HepG2 (cell line): ENCODE measurements at regions of chr15 and their contacts with region 1.

Region 1: DNA sequence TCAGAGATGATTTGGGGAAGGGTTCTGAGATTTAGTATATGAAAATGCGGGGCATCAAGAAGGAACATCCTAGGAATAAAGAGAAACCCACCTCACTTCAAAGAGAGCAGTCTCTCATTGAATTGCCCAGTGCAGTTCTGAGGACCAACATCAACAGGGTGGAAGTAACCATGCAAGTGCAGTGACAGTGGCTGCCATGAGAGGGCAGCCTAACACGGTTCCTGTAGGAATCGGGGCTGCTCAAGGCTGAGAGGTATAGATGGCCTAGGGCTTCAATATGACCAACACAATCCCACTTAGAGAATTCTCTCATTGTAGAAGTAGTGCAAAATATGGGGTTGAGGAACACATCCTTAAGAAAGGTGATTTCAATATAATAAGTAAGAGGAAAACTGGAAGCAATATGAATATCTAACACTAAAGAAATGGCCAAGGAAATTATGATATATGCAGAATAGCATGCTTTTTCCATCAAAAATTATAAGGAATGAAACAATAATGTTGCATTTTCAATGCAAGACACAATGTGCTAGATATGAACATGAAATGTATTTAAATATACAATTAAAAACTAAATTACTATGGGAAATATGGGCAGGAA is 51.1 kb upstream of the ARRDC4 start:
- DNase-seq: peak; percentile 33
- ATAC-seq: peak; percentile 98
- H3K4me3 ChIP-seq: no peak overlapping the region
- H3K27ac ChIP-seq: no peak overlapping the region
- H3K4me1 ChIP-seq: no peaks in the 10 kb centered on the region
- H3K27me3 ChIP-seq: peaks cover 0 to 7% of the 10 kb centered on the region in 2 experiments; a peak in 1 of 5 replicates
- CTCF ChIP-seq: peak; percentile 89
- EP300 ChIP-seq: no peak
- POLR2A ChIP-seq: no peak
- RAD21 ChIP-seq: peak; percentile 63; the same call in 1 of the 2 replicates

Region 2: GRCh38 chr15:97995881-97996603 is 86.7 kb after region 1 on chr15:
- CTCF ChIA-PET with region 1: no interaction called
- POLR2A ChIA-PET with region 1: no interaction called
- in situ Hi-C with region 1: no loop called
- intact Hi-C with region 1: loop called (anchors 10 kb)
- DNase-seq: no peak
- ATAC-seq: peak; percentile 87
- H3K4me3 ChIP-seq: peak overlapping the region in 1 of 3 experiments; percentile 21; a peak in 2 of 6 replicates
- H3K27ac ChIP-seq: no peak overlapping the region
- H3K4me1 ChIP-seq: 0 out of 2 replicates have a peak, but pooled peaks cover 7% of the 10 kb centered on the region
- H3K27me3 ChIP-seq: no peaks in the 10 kb centered on the region
- CTCF ChIP-seq: peak; percentile 68
- EP300 ChIP-seq: no peak
- POLR2A ChIP-seq: no peak
- RAD21 ChIP-seq: peak; percentile 28; the same call in 1 of the 2 replicates

Region 3: DNA sequence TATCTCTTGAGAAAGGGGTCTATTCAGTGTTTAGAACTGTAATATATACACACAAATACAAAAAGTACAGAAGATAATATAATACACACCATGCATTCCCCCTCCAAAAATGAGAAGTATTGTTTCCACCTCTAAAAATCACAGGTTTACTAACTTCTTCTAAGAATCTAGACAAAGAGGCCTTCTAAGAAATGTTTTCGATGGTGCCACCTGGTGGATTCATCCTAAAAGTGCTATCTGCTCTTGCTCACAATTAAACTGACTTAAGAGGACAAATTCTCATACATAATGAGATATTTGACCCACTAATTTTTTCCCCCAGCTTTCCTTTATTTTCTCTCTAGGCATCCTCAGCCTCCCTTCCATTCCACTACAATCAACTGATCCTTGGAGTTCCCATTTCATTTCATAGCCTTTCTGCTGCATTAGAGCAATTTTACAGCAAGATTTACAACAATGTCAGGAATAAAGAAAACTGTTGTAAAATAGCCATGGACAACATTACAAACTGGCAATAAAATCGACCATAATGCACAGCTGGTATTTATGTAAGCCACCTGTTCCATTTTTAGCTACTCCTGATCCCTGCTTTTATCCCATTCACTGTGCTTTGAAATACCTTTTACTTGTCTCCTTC is 175.7 kb after region 1 on chr15:
- CTCF ChIA-PET with region 1: interaction called, 30 read pairs
- POLR2A ChIA-PET with region 1: no interaction called
- in situ Hi-C with region 1: loop called (anchors 5 kb)
- intact Hi-C with region 1: loop called (anchors 1 kb)
- DNase-seq: peak; percentile 43
- ATAC-seq: no peak
- H3K4me3 ChIP-seq: no peak overlapping the region
- H3K27ac ChIP-seq: no peak overlapping the region
- H3K4me1 ChIP-seq: no peaks in the 10 kb centered on the region
- H3K27me3 ChIP-seq: no peaks in the 10 kb centered on the region
- CTCF ChIP-seq: peak; percentile 62
- EP300 ChIP-seq: no peak
- POLR2A ChIP-seq: no peak
- RAD21 ChIP-seq: no peak

Region 4: GRCh38 chr15:98113327-98113726 is 203.9 kb after region 1 on chr15:
- CTCF ChIA-PET with region 1: no interaction called
- POLR2A ChIA-PET with region 1: no interaction called
- in situ Hi-C with region 1: no loop called
- intact Hi-C with region 1: no loop called
- DNase-seq: no peak
- ATAC-seq: no peak
- H3K4me3 ChIP-seq: no peak overlapping the region
- H3K27ac ChIP-seq: no peak overlapping the region
- H3K4me1 ChIP-seq: no peaks in the 10 kb centered on the region
- H3K27me3 ChIP-seq: no peaks in the 10 kb centered on the region
- CTCF ChIP-seq: no peak
- EP300 ChIP-seq: no peak
- POLR2A ChIP-seq: no peak
- RAD21 ChIP-seq: no peak

Region 5: GRCh38 chr15:98177924-98178592 is 268.7 kb after region 1 on chr15:
- CTCF ChIA-PET with region 1: interaction called, 17 read pairs
- POLR2A ChIA-PET with region 1: no interaction called
- in situ Hi-C with region 1: loop called (anchors 5 kb)
- intact Hi-C with region 1: loop called (anchors 1 kb)
- DNase-seq: peak; percentile 56
- ATAC-seq: peak; percentile 97
- H3K4me3 ChIP-seq: no peak overlapping the region
- H3K27ac ChIP-seq: no peak overlapping the region
- H3K4me1 ChIP-seq: no peaks in the 10 kb centered on the region
- H3K27me3 ChIP-seq: peaks cover 0 to 14% of the 10 kb centered on the region in 2 experiments; a peak in 1 of 5 replicates
- CTCF ChIP-seq: peak; percentile 85
- EP300 ChIP-seq: no peak
- POLR2A ChIP-seq: no peak
- RAD21 ChIP-seq: peak; percentile 57

Region 6: GRCh38 chr15:98292442-98293240 is 383.2 kb after region 1 on chr15:
- CTCF ChIA-PET with region 1: interaction called, 7 read pairs
- POLR2A ChIA-PET with region 1: no interaction called
- in situ Hi-C with region 1: loop called (anchors 10 kb)
- intact Hi-C with region 1: loop called (anchors 1 kb)
- DNase-seq: peak; percentile 27
- ATAC-seq: peak; percentile 98
- H3K4me3 ChIP-seq: no peak overlapping the region
- H3K27ac ChIP-seq: no peak overlapping the region
- H3K4me1 ChIP-seq: no peaks in the 10 kb centered on the region
- H3K27me3 ChIP-seq: peaks cover 5 to 27% of the 10 kb centered on the region in 2 experiments
- CTCF ChIP-seq: peak; percentile 79
- EP300 ChIP-seq: no peak
- POLR2A ChIP-seq: no peak
- RAD21 ChIP-seq: no peak

Region 7: DNA sequence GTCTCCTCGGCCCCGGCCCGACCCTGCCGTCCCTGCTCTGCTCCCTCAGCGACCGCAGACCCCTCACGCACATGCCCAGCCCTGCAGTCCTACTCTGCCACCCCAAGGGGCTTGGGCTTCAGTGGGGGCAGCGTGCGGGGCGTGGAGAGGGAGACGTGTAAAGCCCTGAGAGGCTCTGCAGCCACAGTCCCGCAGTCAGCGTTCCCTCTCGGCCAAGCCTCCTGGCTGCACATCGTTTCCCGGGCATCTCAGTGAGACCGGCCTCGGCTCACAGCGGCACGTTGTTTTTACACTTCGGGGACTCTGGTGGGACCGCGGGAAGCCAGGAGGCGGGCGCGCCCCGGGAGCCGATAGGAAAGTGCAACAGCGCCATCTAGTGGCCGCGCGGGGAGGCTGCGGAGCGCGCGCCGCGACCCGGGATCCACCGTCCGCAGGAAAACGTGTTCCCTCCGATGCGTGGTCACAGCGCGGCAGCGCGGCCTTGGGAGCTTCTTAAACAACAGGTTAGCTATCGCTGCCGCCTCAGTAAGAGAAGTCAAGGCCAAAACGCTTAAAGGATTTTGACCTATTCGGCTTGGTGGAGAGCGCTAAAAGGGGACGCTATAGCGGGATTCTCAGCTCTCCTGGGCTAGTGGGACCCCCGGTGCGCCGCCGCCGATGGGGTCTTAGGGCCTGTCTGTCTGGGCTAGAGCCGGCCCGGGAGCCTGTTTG is 512.2 kb after region 1 on chr15:
- CTCF ChIA-PET with region 1: no interaction called
- POLR2A ChIA-PET with region 1: no interaction called
- in situ Hi-C with region 1: loop called (anchors 25 kb)
- intact Hi-C with region 1: loop called (anchors 10 kb)
- DNase-seq: peak; percentile 11
- ATAC-seq: peak; percentile 90
- H3K4me3 ChIP-seq: no peak overlapping the region
- H3K27ac ChIP-seq: no peak overlapping the region
- H3K4me1 ChIP-seq: no peaks in the 10 kb centered on the region
- H3K27me3 ChIP-seq: peaks cover 7 to 42% of the 10 kb centered on the region in 2 experiments; a peak in 4 of 5 replicates
- CTCF ChIP-seq: peak; percentile 96
- EP300 ChIP-seq: no peak
- POLR2A ChIP-seq: no peak
- RAD21 ChIP-seq: peak; percentile 97

Region 8: DNA sequence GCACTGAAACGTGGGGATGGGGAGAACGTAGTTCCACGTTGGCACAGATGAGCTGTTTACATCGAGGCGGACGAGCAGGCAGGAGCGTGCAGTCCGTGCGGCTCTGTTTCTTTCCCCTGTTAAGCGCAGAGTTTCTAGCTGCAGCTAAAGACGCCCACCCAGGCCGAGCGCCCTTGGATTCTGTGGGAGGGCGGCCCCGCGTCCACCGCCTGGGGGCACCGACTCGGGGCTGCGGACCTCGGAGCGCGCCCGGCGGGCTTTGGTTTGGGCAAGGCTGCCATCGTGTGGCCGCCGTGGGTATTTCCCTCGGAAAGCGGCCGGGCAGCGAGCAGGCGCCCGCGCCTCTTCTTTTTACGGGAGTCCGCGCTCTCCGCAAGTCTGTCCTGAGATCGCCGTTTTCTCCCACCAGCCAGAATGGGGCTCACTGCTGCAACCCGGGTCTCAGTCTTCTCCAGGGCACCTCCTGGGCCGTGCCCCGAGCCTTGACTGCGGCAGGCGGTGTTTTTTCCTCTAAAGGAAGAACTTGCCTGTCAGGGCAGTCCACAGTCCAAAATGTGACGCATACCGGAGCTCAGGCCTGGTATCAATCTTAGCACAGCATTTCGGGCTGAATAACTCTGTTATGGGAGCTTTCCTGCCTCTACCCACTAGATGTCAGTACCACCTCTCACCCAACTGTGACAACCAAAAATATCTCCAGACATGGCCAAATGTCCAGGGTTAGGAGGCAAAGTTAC is 519.0 kb after region 1 on chr15:
- CTCF ChIA-PET with region 1: no interaction called
- POLR2A ChIA-PET with region 1: no interaction called
- in situ Hi-C with region 1: loop called (anchors 25 kb)
- intact Hi-C with region 1: loop called (anchors 10 kb)
- DNase-seq: peak; percentile 57
- ATAC-seq: peak; percentile 92
- H3K4me3 ChIP-seq: peak overlapping the region; percentile 39 to 65 (median 44); a peak in 5 of 6 replicates
- H3K27ac ChIP-seq: no peak overlapping the region
- H3K4me1 ChIP-seq: 0 out of 2 replicates have a peak, but pooled peaks cover 5% of the 10 kb centered on the region
- H3K27me3 ChIP-seq: peaks cover 0 to 37% of the 10 kb centered on the region in 2 experiments; a peak in 2 of 5 replicates
- CTCF ChIP-seq: peak; percentile 85
- EP300 ChIP-seq: no peak
- POLR2A ChIP-seq: no peak
- RAD21 ChIP-seq: peak; percentile 79